ENCODE measurements at regions of chr9 and their contacts with region 1.

Region 1: GRCh38 chr9:120477521-120478001 is 102.4 kb downstream of the CDK5RAP2 start:
- DNase-seq: peak; percentile 72
- H3K4me3 ChIP-seq: no peak overlapping the region
- CTCF ChIP-seq: peak; percentile 94

Region 2: GRCh38 chr9:119556129-119556875 is 921.3 kb before region 1 on chr9:
- CTCF ChIA-PET with region 1: interaction called, 54 read pairs
- POLR2A ChIA-PET with region 1: no interaction called
- DNase-seq: no peak
- H3K4me3 ChIP-seq: peak overlapping the region; percentile 50
- CTCF ChIP-seq: peak; percentile 93

Region 3: GRCh38 chr9:120032639-120033038 is 444.9 kb before region 1 on chr9:
- CTCF ChIA-PET with region 1: no interaction called
- POLR2A ChIA-PET with region 1: no interaction called
- DNase-seq: no peak
- H3K4me3 ChIP-seq: no peak overlapping the region
- CTCF ChIP-seq: no peak

Region 4: DNA sequence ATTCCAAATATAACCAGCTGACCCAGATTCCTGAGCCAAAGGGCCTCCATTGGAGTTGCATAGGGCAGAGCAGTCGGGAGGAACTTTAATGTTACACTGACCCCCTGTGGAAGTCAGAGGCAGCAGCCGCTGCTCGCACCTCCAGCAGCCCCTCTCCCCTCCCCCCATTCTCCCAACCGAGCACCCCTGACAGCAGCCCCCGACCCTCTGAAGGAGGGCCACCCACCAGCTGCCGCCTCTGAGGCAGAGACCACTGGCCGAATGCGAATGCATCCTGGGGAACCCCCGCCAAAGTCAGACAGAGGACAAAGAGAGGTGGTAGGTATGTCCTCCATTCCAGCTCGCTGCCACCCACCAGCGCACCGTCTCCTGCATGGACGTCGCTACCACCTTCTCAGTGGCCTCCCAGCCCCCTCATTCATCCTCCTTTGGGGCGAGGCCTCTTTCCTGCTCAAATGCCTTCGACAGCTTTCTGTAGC is 128.6 kb before region 1 on chr9:
- CTCF ChIA-PET with region 1: interaction called, 43 read pairs
- POLR2A ChIA-PET with region 1: interaction called, 3 read pairs
- DNase-seq: no peak
- H3K4me3 ChIP-seq: no peak overlapping the region
- CTCF ChIP-seq: peak; percentile 75

Region 5: DNA sequence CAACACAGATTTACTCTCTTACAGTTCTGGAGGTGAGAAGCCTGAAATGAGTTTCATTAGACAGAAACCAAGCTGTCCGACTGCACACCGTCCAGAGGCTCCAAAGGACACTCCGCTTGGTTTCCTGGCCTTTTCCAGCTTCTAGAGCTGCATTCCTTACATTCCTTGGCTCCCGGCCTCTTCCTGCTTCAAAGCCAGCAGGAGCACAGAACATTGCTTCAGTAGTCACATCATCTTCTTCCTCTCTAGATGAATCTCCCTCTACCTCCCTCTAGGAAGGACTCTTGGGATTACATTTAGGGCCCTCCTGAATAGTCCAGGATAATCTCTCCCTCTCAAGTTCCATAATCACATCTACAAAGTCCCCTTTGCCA is 110.9 kb before region 1 on chr9:
- CTCF ChIA-PET with region 1: interaction called, 17 read pairs
- POLR2A ChIA-PET with region 1: no interaction called
- DNase-seq: peak; percentile 62
- H3K4me3 ChIP-seq: no peak overlapping the region
- CTCF ChIP-seq: peak; percentile 54

Region 6: GRCh38 chr9:120438836-120439546 is 38.6 kb before region 1 on chr9:
- CTCF ChIA-PET with region 1: interaction called, 14 read pairs
- POLR2A ChIA-PET with region 1: no interaction called
- DNase-seq: no peak
- H3K4me3 ChIP-seq: no peak overlapping the region
- CTCF ChIP-seq: peak; percentile 64

Region 7: GRCh38 chr9:120464176-120464886 is 13.2 kb before region 1 on chr9:
- CTCF ChIA-PET with region 1: interaction called, 16 read pairs
- POLR2A ChIA-PET with region 1: no interaction called
- DNase-seq: no peak
- H3K4me3 ChIP-seq: no peak overlapping the region
- CTCF ChIP-seq: no peak